AG04449 (cell line): ENCODE measurements at regions of chr17 and their contacts with region 1.

Region 1: GRCh38 chr17:35747540-35748017 is 5.5 kb downstream of the GAS2L2 start:
- DNase-seq: peak; percentile 26
- H3K4me3 ChIP-seq: no peak overlapping the region
- CTCF ChIP-seq: peak; percentile 87

Region 2: DNA sequence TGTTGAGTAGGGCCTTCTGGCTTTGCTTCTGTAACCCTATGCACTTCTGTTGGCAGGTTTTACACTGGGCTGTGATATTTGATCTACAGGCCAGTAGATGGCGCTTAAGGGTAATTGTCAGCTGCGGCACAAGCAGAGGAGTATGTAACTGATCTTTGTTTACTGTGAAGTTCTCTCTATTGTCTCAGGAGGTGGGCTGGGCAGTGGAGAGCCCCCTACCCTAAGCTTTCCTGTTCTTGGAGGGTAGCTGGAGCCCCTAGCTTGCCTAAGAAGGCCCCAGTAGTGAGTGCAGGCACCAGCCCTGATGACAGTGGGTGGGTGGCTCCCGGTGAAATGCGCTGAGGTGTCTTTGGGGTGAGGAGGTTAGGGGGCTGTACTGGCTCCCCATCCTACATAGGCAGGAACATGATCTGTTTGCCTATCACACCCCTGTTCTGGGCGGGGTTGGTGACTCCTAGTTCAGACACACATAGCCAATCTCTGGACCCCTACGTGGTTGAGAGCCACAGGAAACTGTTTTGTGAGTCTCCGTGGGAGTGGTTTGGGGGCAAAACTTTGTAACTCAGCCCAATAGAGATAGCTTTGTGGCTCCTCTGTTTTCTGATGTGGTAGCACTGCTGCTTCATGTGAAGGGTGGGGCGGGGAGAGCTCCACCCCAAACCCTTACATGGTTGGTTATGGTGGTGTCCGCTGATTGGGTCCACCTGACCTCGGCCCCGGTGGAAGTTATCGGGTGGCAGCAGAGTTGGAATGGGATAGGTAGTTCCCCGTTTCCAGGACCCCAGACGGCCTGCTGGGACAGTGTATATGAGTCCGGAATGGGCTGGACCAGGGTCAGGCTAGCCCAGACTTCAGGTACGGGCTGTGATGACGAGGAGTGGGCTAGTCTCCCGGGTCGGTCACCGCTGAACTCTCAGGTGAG is 434.5 kb before region 1 on chr17:
- CTCF ChIA-PET with region 1: interaction called, 23 read pairs
- POLR2A ChIA-PET with region 1: no interaction called
- DNase-seq: peak; percentile 16
- H3K4me3 ChIP-seq: peak overlapping the region; percentile 12; the same call in 1 of the 2 replicates
- CTCF ChIP-seq: peak; percentile 69

Region 3: GRCh38 chr17:35578197-35578928 is 169.2 kb before region 1 on chr17 and contains the start of gene PEX12:
- CTCF ChIA-PET with region 1: interaction called, 15 read pairs
- POLR2A ChIA-PET with region 1: no interaction called
- DNase-seq: no peak
- H3K4me3 ChIP-seq: peak within 1 kb of the TSS; percentile 83
- CTCF ChIP-seq: no peak

Region 4: DNA sequence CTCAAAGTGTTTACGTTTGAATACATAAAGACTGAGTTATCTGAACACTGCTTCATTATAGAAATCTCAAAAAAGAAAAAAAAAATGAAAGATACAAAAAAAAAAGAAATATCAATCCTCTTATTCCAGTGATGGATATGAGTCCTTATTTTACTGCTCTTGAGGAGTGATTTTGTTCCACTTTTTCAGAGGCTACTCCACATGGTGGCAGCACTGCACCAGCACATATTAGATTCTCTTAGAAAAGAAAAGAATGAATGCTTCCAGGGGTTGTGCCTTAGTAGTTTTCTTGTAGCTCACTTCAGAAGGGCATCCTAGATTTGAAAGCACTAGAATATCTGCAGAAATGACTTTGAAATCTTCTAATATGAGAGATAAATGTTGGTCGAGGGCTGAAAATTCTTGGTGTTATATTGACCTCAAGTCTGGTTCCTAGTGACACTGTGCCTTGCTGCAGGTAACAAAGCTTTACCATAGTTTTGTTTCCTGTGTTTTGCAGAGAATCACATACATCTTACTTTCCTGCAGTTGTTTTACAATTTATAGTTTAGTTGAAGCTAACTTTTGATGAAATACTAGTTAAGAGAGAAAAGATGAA is 134.6 kb before region 1 on chr17:
- CTCF ChIA-PET with region 1: interaction called, 565 read pairs
- POLR2A ChIA-PET with region 1: interaction called, 5 read pairs
- DNase-seq: peak; percentile 4
- H3K4me3 ChIP-seq: no peak overlapping the region
- CTCF ChIP-seq: peak; percentile 53

Region 5: DNA sequence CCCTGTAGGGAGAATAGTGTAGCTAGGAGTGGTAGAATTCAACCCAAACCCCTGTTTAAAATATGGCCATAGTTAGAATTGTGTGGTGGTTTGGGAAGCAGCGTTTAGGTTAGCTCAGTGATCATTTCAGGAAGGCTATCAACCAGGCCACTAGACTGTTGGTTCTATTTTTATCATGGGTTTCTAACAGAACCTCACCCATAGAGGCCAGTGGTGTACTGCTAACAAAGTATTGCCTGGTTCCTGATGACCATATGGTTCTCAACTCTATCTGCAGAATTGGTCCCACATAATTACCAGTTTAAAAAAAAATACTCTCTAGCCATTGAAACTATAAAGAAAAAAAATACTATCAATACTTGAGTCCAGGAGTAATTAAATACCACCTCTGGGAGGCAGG is 86.7 kb before region 1 on chr17:
- CTCF ChIA-PET with region 1: interaction called, 27 read pairs
- POLR2A ChIA-PET with region 1: no interaction called
- DNase-seq: no peak
- H3K4me3 ChIP-seq: no peak overlapping the region
- CTCF ChIP-seq: no peak

Region 6: GRCh38 chr17:35726127-35726952 is 21.2 kb before region 1 on chr17:
- CTCF ChIA-PET with region 1: interaction called, 33 read pairs
- POLR2A ChIA-PET with region 1: interaction called, 3 read pairs
- DNase-seq: peak; percentile 85
- H3K4me3 ChIP-seq: no peak overlapping the region
- CTCF ChIP-seq: no peak

Region 7: DNA sequence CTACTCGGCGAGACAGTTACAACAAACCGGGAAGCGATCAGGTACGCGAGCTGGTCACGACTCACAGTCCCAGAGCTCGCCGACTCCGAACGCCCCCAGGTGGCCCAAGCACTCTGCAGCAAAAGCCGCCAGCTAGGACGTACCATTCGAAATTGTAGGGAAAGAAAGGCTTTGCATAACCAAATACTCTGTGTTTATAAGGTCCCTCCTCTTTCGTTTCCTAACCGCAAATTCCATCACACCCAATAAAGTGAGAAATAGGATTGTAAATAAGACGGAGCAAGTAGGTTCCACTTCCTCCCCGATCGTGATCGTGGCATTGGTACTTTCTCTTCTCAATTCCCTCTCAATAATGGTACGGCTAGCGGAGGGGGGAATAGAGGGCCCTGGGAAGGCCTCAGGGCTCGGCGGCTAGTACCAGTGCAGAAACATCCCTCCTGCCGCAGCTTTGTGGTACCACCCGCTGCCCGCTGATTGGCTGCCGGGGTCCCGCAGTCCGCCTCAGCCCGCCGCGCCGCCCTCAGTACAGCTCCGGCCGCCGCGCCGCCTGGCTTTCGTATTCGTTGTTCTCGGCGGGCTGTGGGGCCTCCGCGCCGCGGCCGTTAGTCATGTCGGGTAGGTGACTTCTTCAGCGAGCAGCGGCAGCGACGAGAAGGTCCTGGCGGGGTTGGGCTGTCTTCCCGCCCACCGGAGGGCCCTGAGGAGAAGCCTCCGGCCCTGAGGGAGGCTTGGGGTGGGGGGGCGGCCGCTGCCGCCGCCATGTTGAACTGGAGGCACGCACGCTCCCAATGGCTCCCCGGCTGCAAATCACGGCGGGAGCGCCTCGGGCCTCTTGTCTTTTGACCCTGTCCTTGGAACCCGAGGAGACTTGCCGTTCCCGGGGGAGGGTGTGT is 61.6 kb after region 1 on chr17 and contains the start of gene TAF15:
- CTCF ChIA-PET with region 1: interaction called, 35 read pairs
- POLR2A ChIA-PET with region 1: interaction called, 4 read pairs
- DNase-seq: peak; percentile 95
- H3K4me3 ChIP-seq: peak within 1 kb of the TSS; percentile 88
- CTCF ChIP-seq: peak; percentile 83

Region 8: DNA sequence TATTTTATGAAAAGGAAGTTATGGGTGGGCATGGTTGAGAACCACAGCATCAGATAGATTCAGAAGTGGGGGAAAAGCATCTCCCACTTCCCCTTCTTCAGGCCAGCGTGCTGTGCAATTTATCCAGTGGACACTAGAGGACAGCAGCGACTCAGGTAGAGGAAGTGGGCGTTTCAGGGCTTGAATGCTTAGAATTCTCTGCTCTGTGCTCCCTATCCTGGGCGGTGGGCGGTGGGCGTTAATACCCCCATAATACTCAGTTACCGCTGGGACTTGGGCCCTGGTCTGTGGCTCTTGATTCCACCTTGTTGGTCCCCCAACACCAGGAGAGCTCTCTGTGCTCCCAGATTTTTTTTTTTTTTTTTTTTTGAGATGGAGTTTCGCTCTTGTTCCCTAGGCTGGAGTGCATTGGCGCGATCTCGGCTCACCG is 199.6 kb after region 1 on chr17:
- CTCF ChIA-PET with region 1: no interaction called
- POLR2A ChIA-PET with region 1: no interaction called
- DNase-seq: no peak
- H3K4me3 ChIP-seq: no peak overlapping the region
- CTCF ChIP-seq: peak; percentile 70